Left lung (tissue), 14 donors: ENCODE measurements at regions of chr3 and their contacts with region 1.

Region 1: DNA sequence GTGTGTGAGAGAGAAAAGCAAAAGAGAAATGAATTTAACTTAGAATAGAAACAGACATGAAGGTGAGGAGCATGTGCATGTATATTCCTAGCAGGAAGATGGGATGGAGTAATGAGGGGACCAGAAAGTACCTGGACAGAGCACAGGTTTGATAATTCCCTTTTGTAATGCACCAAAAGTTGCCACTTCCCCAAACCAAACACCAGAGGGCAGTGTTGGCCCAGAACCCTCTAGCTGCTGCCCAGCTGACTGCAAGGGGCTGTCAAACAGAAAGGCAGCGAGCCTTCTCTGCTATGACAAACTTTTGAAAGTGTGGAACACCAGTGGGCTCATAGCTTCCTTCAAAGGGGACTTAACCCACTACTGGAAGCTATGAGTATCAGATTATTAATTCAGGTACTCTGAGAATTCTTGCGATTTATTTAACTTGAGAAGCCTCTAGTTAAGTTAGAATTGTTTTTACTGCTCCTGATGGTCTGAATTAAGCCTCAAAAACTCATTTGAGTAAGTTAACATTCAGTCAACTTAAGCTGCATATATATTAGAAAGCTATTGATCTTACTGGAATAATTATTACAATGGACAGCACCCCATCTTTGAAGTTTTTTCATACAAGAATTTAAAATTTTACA is 234.9 kb downstream of the NEK10 start:
- DNase-seq: peak in 3 of 4 donors; percentile 45 to 72 (median 49)
- ATAC-seq: peak; percentile 97
- H3K4me3 ChIP-seq: no peak overlapping the region
- H3K27ac ChIP-seq: no peak overlapping the region
- H3K4me1 ChIP-seq: no peaks in the 10 kb centered on the region
- H3K27me3 ChIP-seq: no peaks in the 10 kb centered on the region
- CTCF ChIP-seq: peak; percentile 81 to 83

Region 2: DNA sequence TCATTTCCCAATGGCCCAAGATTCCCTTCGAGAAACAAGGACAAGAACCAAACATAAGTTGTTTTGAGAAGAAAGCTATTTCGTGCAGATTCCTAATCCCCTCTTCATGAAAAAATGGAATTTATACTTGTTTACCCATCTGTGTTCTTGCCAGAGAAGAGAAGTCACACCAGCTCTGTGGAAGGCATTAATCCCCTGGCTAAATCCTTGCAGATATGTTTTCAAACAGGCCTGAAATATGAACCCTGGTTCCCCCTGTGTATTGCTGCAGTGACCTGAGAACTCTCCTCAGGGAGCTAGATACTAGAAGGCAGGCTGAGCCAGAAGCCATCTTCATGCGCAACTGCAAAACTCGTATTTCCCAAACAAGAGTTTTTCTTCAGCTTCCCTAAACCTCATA is 102.8 kb before region 1 on chr3:
- intact Hi-C with region 1: no loop called
- DNase-seq: no peak
- ATAC-seq: no peak
- H3K4me3 ChIP-seq: no peak overlapping the region
- H3K27ac ChIP-seq: no peak overlapping the region
- H3K4me1 ChIP-seq: no peaks in the 10 kb centered on the region
- H3K27me3 ChIP-seq: no peaks in the 10 kb centered on the region
- CTCF ChIP-seq: no peak

Region 3: GRCh38 chr3:27253831-27254230 is 119.5 kb after region 1 on chr3:
- intact Hi-C with region 1: loop called in 1 of 2 experiments (anchors 10 kb)
- DNase-seq: peak in 3 of 4 donors; percentile 37 to 48 (median 47)
- ATAC-seq: peak; percentile 99
- H3K4me3 ChIP-seq: no peak overlapping the region
- H3K27ac ChIP-seq: no peak overlapping the region
- H3K4me1 ChIP-seq: no peaks in the 10 kb centered on the region
- H3K27me3 ChIP-seq: no peaks in the 10 kb centered on the region
- CTCF ChIP-seq: peak in 1 of 2 donors; percentile 31